Left ventricle myocardium superior (tissue), 1 donor: ENCODE measurements at regions of chr6 and their contacts with region 1.

Region 1: DNA sequence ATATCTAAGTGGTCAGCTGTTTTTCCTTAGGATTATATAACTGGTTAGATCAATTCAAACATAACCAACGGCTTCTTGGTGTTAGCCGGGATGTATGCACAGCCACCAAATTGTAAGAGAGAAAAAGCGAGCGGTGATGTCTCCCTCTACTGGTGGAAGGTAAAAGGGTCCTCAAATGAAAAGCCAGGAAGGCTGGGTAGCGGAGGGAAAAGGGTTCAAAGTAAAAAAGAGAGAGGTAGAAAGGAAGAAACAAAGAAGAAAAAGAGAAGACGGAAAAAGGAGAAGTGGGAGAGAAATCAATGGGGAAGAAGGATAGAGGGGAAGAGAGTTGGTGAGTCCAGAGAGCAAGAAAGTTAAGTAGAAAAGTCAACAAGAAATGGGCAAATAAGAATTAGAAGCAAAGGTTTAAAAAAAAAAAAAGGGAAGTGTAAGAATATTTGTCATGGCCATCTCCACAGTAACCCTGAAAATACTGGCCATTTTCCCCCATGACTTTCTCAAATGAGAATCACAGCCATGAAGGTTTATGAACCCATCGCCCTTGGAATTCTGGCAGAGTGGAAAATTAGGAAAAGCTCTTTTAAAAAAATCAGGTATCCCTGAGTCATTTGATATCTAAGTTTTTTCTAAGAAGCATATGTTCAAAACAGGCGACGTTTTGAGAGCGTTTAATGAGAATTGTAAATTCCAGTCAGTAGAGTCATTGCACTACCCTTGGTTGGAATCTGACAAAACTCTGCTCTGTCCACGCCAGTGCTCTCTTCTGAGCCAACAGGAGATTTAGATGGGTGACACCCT is 155.6 kb upstream of the SNX9 start:
- DNase-seq: no peak
- ATAC-seq: peak; percentile 42

Region 2: GRCh38 chr6:157314705-157315321 is 352.6 kb before region 1 on chr6:
- intact Hi-C with region 1: loop called (anchors 5 kb)
- DNase-seq: no peak
- ATAC-seq: peak; percentile 64

Region 3: GRCh38 chr6:157571269-157571668 is 96.1 kb before region 1 on chr6:
- intact Hi-C with region 1: no loop called
- DNase-seq: no peak
- ATAC-seq: no peak